ENCODE measurements at regions of chr12 and their contacts with region 1.

Region 1: DNA sequence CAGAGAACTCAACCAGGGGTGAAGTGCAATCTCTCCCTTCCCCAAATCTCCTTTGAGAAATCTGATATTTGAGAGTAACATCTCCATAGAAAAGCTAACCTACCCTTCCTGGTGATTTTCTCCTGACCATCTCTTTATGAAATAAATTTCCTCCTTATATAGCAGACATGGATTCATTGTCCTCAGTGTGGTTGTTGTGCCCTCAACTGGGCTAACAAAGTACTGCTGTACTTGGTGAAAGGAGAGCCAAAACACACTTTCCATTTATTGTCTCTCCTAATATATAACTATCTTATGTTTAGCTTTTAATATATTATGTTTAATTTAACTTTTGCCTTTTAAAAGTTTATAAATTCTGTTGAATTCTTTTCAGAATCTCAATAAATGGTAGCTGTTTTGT is 65.1 kb upstream of the SLCO1B1 start:
- DNase-seq: no peak
- ATAC-seq: no peak
- H3K4me3 ChIP-seq: no peak overlapping the region
- H3K27ac ChIP-seq: no peak overlapping the region
- H3K4me1 ChIP-seq: no peaks in the 10 kb centered on the region
- H3K27me3 ChIP-seq: no peaks in the 10 kb centered on the region

Region 2: DNA sequence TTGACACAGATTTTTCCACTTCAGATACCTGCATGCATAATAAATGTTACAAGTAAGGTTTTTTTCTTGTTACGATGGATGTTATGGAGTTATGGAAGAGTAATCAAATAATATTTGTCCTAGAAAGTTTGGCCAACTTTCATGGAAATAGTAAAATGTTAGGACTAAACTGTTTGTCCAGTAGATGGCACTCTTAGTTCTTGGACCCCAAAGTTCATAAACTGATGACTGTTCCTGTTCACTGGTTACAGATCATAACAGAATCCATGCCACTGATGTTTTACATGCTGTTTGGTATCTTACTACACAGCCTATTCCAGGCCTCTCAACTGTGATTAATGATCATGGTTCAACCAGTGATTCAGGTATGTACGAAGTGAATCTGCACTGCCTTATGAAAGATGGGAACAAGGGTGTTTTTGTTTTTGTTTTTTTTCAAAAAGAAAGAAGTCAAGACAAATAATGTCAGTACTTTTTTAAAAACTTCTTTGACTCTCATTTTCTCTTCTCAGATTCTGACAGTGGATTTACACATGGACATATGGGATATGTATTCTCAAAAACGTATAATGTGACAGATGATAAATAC is 419.5 kb before region 1 on chr12:
- intact Hi-C with region 1: loop called (anchors 5 to 10 kb)
- DNase-seq: no peak
- ATAC-seq: peak; percentile 57
- H3K4me3 ChIP-seq: no peak overlapping the region
- H3K27ac ChIP-seq: no peak overlapping the region
- H3K4me1 ChIP-seq: no peaks in the 10 kb centered on the region
- H3K27me3 ChIP-seq: no peaks in the 10 kb centered on the region

Region 3: GRCh38 chr12:20731274-20731673 is 334.6 kb before region 1 on chr12:
- intact Hi-C with region 1: loop called in 1 of 2 experiments (anchors 10 kb)
- DNase-seq: no peak
- ATAC-seq: no peak
- H3K4me3 ChIP-seq: no peak overlapping the region
- H3K27ac ChIP-seq: no peak overlapping the region
- H3K4me1 ChIP-seq: no peaks in the 10 kb centered on the region
- H3K27me3 ChIP-seq: no peaks in the 10 kb centered on the region

Region 4: GRCh38 chr12:20946732-20947131 is 119.1 kb before region 1 on chr12:
- intact Hi-C with region 1: loop called in 1 of 2 experiments (anchors 10 kb)
- DNase-seq: no peak
- ATAC-seq: no peak
- H3K4me3 ChIP-seq: no peak overlapping the region
- H3K27ac ChIP-seq: no peak overlapping the region
- H3K4me1 ChIP-seq: no peaks in the 10 kb centered on the region
- H3K27me3 ChIP-seq: no peaks in the 10 kb centered on the region

Measured in aorta (tissue), 5 donors.